ENCODE measurements at regions of chr3 and their contacts with region 1.

Region 1: GRCh38 chr3:97971677-97972567 is at the start of gene RIOX2:
- DNase-seq: peak; percentile 62 to 82 (median 77)
- ATAC-seq: peak; percentile 94
- H3K4me3 ChIP-seq: peak within 1 kb of the TSS; percentile 57
- H3K4me3 Mint-ChIP-seq: peak within 1 kb of the TSS; percentile 78 to 97 (median 93)
- H3K27ac ChIP-seq: peak within 1 kb of the TSS; percentile 74
- H3K27ac Mint-ChIP-seq: peak within 1 kb of the TSS; percentile 84 to 96 (median 90)
- H3K4me1 ChIP-seq: peaks cover 9 to 24% of the 10 kb centered on the region in 2 donors
- H3K4me1 Mint-ChIP-seq: peaks cover 42 to 85% (median 70%) of the 10 kb centered on the region in 7 donors
- H3K27me3 ChIP-seq: no peaks in the 10 kb centered on the region
- H3K27me3 Mint-ChIP-seq: no peaks in the 10 kb centered on the region
- total RNA-seq, gene RIOX2: 17.8 to 110 (median 28.4) TPM

Region 2: GRCh38 chr3:97793420-97794019 is 178.4 kb before region 1 on chr3:
- CTCF ChIA-PET with region 1: no interaction called
- POLR2A ChIA-PET with region 1: no interaction called
- intact Hi-C with region 1: loop called (anchors 1 kb)
- DNase-seq: peak in 7 of 9 donors; percentile 30 to 67 (median 61)
- ATAC-seq: peak; percentile 80
- H3K4me3 ChIP-seq: no peak overlapping the region
- H3K4me3 Mint-ChIP-seq: no peak overlapping the region
- H3K27ac ChIP-seq: no peak overlapping the region
- H3K27ac Mint-ChIP-seq: no peak overlapping the region
- H3K4me1 ChIP-seq: no peaks in the 10 kb centered on the region
- H3K4me1 Mint-ChIP-seq: peaks cover 0 to 3% (median 0%) of the 10 kb centered on the region in 7 donors
- H3K27me3 ChIP-seq: no peaks in the 10 kb centered on the region
- H3K27me3 Mint-ChIP-seq: no peaks in the 10 kb centered on the region

Region 3: GRCh38 chr3:97910931-97911351 is 61.0 kb before region 1 on chr3:
- CTCF ChIA-PET with region 1: no interaction called
- POLR2A ChIA-PET with region 1: no interaction called
- intact Hi-C with region 1: loop called in 1 of 2 experiments (anchors 1 kb)
- DNase-seq: peak in 6 of 9 donors; percentile 10 to 54 (median 32)
- ATAC-seq: peak; percentile 89
- H3K4me3 ChIP-seq: peak overlapping the region; percentile 2
- H3K4me3 Mint-ChIP-seq: peak overlapping the region in 9 of 10 donors; percentile 66 to 89 (median 84)
- H3K27ac ChIP-seq: peak overlapping the region; percentile 48
- H3K27ac Mint-ChIP-seq: peak overlapping the region; percentile 65 to 98 (median 95)
- H3K4me1 ChIP-seq: peaks cover 17 to 18% of the 10 kb centered on the region in 2 donors
- H3K4me1 Mint-ChIP-seq: peaks cover 15 to 30% (median 21%) of the 10 kb centered on the region in 7 donors
- H3K27me3 ChIP-seq: no peaks in the 10 kb centered on the region
- H3K27me3 Mint-ChIP-seq: no peaks in the 10 kb centered on the region

Region 4: GRCh38 chr3:97957617-97958311 is 14.2 kb before region 1 on chr3:
- CTCF ChIA-PET with region 1: interaction called, 4 read pairs
- POLR2A ChIA-PET with region 1: interaction called, 4 read pairs
- intact Hi-C with region 1: loop called in 1 of 2 experiments (anchors 2 kb)
- DNase-seq: no peak
- ATAC-seq: peak; percentile 44
- H3K4me3 ChIP-seq: no peak overlapping the region
- H3K4me3 Mint-ChIP-seq: no peak overlapping the region
- H3K27ac ChIP-seq: no peak overlapping the region
- H3K27ac Mint-ChIP-seq: no peak overlapping the region
- H3K4me1 ChIP-seq: no peaks in the 10 kb centered on the region
- H3K4me1 Mint-ChIP-seq: peaks cover 5 to 48% (median 18%) of the 10 kb centered on the region in 7 donors
- H3K27me3 ChIP-seq: no peaks in the 10 kb centered on the region
- H3K27me3 Mint-ChIP-seq: no peaks in the 10 kb centered on the region

Region 5: DNA sequence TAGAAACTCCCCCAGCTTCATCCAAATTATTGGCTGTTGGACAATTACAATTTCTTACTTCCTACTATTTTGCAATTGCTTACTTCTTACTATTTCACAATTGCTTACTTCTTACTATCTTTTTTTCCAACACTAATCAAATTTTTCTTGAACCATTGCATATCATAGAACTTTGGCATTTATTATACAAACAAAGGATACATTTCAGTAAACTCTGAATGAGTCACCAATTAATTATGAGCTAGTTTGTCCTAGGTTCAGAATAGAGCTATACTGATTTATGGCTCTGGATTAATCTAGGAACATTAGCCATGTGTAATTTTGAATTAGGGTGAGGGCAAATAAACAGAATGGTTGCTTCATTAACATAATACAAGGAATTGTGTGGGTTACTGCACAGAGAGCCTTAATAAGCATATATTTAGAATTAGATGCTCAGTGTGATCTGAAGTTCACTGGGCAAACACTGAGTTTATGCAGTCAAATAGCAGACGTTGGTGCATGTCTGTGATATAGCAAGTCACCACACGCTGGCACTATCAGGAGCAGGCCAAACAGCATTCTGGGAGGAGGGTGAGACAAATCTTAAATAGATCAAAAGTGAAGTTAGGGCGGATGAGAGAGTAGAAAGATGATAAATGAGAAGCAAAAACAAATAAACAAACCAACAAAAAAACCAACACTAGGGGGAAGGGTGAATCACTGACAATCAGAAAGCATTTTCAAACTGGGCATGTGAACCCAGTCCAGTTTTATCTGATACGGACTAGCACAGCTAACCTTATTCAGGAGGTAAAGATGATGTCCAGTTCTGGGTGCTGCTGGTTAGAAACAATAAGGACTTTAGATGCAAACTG is 41.7 kb after region 1 on chr3:
- CTCF ChIA-PET with region 1: no interaction called
- POLR2A ChIA-PET with region 1: interaction called, 3 read pairs
- intact Hi-C with region 1: loop called in 1 of 2 experiments (anchors 5 kb)
- DNase-seq: no peak
- ATAC-seq: no peak
- H3K4me3 ChIP-seq: no peak overlapping the region
- H3K4me3 Mint-ChIP-seq: no peak overlapping the region
- H3K27ac ChIP-seq: no peak overlapping the region
- H3K27ac Mint-ChIP-seq: no peak overlapping the region
- H3K4me1 ChIP-seq: peaks cover 0 to 4% of the 10 kb centered on the region in 2 donors
- H3K4me1 Mint-ChIP-seq: peaks cover 0 to 31% (median 5%) of the 10 kb centered on the region in 7 donors
- H3K27me3 ChIP-seq: no peaks in the 10 kb centered on the region
- H3K27me3 Mint-ChIP-seq: no peaks in the 10 kb centered on the region

Region 6: DNA sequence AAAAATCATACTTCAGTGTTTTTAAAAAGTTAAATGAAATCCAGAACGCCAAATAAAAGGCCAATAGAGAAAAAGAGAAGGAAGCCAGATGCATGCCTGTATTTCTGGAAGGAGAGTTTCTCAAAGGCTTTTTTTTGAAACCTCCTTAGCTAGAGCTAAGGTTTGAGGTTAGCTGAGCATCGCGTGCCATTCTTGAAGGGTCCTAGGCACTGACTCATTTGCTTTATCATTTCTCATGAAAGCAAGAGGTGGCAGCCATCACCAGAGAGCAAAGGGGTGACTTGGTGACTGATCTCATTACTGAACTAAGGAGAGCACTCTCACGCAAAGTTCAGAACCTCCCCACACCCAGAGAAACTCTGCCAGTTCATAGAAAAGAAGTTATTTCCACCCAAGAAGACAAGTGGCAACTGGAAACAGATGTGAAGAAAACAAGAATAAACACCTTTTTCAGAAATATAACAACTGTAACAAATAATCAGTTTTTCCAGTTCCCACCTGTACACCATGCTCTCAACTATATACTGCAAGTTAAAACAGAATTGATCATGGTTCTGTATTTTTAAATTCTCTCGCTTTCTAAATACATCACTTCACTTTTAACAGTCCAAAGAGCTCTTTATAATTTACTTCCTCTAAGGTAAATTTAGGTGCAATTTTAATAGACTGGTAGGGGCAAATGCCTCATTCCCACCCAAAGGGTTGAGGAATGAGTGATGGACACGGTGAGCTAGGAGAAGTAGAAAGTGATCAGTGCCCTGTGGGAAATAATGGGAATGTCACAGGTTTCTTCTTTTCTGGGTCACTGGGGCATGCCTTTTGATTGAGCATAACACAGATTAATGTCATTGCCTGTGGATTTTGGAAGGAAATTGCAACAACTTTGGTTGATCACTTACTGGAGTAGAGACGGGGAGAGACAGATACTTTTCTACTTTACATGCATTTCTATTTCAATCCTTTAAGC is 584.5 kb after region 1 on chr3:
- CTCF ChIA-PET with region 1: no interaction called
- POLR2A ChIA-PET with region 1: no interaction called
- intact Hi-C with region 1: loop called in 1 of 2 experiments (anchors 5 kb)
- DNase-seq: peak in 2 of 9 donors; percentile 19 to 58
- ATAC-seq: peak; percentile 77
- H3K4me3 ChIP-seq: no peak overlapping the region
- H3K4me3 Mint-ChIP-seq: peak overlapping the region in 3 of 10 donors; percentile 9 to 83 (median 30)
- H3K27ac ChIP-seq: no peak overlapping the region
- H3K27ac Mint-ChIP-seq: peak overlapping the region in 5 of 9 donors; percentile 5 to 98 (median 40)
- H3K4me1 ChIP-seq: peaks cover 0 to 56% of the 10 kb centered on the region in 2 donors
- H3K4me1 Mint-ChIP-seq: peaks cover 6 to 84% (median 23%) of the 10 kb centered on the region in 7 donors
- H3K27me3 ChIP-seq: no peaks in the 10 kb centered on the region
- H3K27me3 Mint-ChIP-seq: peaks cover 0 to 5% (median 0%) of the 10 kb centered on the region in 5 donors